Thyroid gland (tissue), 4 donors: ENCODE measurements at regions of chr10 and their contacts with region 1.

Region 1: GRCh38 chr10:70758757-70759514 is 26.2 kb downstream of the TBATA start:
- DNase-seq: peak; percentile 77 to 79
- H3K4me3 ChIP-seq: no peak overlapping the region
- H3K27ac ChIP-seq: no peak overlapping the region
- H3K4me1 ChIP-seq: peaks cover 18 to 31% of the 10 kb centered on the region in 2 donors
- H3K27me3 ChIP-seq: no peaks in the 10 kb centered on the region
- CTCF ChIP-seq: peak; percentile 33 to 76 (median 68)
- POLR2A ChIP-seq: no peak

Region 2: DNA sequence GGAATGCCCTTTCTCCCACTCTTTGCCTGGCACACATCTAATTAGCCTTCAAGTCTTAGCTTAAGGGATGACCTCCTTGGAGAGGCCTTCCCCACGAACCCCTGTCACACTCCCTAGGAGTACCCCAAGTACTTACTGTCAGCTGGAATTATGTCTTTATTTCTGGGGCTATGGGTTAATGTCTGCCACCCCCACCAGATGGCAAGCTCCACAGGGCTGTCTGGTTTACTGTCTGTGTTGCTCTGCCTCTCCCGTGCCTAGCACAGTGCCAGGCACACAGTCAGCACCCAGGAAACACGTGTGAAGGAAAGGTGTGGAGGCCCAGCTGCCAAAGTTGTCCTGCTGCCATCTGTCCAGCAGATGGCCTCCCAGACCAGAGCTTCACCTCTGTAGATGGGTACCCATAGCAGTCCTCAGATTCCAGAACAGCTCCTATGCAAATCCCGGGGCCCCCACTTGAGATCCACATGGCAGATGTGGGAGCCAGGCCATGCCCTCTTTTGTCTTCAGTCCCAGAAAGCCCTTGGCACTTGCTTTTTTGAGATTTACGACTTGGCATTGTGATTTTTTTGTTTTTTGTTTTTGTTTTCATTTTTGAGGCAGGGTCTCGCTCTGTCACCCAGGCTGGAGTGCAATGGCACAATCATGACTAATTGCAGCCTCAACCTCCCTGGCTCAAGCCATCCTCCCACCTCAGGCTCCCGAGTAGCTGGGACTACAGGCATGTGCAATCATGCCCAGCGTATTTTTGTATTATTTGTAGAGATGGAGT is 297.5 kb before region 1 on chr10:
- intact Hi-C with region 1: loop called (anchors 5 kb)
- DNase-seq: peak; percentile 53 to 56
- H3K4me3 ChIP-seq: no peak overlapping the region
- H3K27ac ChIP-seq: no peak overlapping the region
- H3K4me1 ChIP-seq: peaks cover 11 to 20% of the 10 kb centered on the region in 2 donors
- H3K27me3 ChIP-seq: no peaks in the 10 kb centered on the region
- CTCF ChIP-seq: peak; percentile 47 to 88 (median 78)
- POLR2A ChIP-seq: no peak

Region 3: DNA sequence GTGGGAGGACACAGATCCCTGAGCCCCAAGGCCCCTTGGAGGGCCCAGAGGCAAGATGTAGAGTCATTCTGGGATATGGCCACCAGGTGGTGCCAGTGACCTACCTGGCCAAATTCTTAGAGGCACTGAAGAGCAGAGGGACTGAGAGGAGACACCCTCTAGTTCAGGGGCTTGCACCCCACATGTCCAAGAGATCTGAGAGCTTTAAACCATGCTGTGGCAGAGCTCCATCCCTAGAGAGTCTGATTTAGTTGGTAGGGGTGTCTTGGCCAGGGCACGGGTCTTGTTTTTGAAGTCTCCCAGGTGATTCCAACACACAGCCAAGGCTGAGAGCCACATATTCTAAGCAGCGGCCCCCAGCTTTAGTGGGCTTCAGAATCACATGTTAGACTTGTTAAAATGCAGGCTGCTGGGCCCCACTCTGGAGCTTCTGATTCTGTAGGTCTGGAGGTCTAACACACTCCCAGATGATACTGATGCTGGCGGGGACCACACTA is 208.9 kb before region 1 on chr10:
- intact Hi-C with region 1: loop called (anchors 2 kb)
- DNase-seq: peak; percentile 69 to 76
- H3K4me3 ChIP-seq: no peak overlapping the region
- H3K27ac ChIP-seq: no peak overlapping the region
- H3K4me1 ChIP-seq: peaks cover 5 to 16% of the 10 kb centered on the region in 2 donors
- H3K27me3 ChIP-seq: no peaks in the 10 kb centered on the region
- CTCF ChIP-seq: peak; percentile 80 to 95 (median 88)
- POLR2A ChIP-seq: no peak

Region 4: DNA sequence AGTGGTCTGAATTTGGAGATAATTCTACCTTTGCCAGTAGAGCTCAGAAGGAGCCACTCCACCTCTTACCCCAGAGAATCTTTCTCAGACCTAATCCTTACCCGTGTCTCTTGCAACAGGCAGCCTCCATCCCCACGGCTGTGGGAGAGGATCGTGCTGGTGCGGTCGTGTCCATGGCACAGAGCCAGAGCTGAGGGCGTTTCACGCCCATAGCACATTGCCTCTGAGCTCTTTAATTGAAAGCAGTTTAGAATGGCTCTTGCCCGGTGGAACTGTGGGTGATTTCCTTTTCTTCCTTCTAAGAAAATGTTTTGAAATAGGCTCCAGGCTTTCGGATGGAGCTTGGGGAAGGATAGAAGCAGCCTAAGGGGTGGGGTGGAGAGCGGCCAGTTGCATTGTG is 197.9 kb before region 1 on chr10:
- intact Hi-C with region 1: loop called (anchors 5 kb)
- DNase-seq: no peak
- H3K4me3 ChIP-seq: no peak overlapping the region
- H3K27ac ChIP-seq: no peak overlapping the region
- H3K4me1 ChIP-seq: peaks cover 4 to 11% of the 10 kb centered on the region in 2 donors
- H3K27me3 ChIP-seq: no peaks in the 10 kb centered on the region
- CTCF ChIP-seq: no peak
- POLR2A ChIP-seq: no peak

Region 5: DNA sequence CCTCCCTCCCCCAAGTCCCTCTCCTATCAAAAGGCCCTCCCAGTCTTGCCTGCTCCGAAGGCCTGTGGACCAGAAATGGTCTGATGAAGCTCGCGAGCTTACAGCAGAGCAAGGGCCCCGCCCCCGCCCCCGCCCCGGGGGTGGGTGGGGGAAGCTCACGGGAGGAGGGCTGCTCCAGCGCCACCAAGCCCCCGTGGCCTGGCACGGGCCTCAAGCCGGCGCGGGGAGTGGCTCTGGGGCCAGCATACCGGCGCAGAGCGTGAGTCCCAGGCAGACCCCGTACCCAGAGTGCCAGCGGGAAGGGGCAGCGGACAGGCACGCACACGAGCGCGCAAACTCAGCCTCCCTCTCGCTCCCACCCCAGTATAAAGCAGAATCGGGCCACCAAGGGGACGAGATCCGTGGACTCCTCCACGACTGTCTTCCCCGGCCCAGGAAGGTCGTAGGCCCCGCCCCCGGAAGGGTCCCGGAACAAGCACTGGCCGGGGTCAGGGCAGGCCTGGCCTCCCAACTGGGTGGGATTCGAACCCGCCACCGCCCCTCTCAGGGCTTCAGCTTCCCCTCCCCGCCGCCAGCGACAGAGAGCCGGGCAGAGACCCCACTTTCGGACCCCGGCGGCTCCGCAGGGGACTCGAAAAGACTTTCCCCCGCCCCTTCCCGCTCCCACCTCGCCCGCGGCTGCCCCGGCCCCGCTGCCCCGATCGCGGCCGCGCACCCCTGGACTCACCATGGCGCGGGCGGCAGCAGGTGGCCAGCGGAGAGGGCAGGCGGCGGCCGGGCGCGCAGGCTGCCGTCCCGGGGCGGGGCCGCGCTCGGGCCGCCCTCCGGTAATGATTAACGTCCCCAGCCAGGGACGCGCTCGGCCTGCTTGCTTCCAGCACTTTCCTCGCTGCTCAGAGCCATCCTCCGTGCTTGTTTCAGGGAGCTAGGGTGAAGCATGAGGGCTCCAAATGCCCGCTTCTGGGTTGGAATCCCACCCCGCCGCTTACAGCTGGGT is 129.2 kb after region 1 on chr10 and contains the start of gene PCBD1:
- intact Hi-C with region 1: no loop called
- DNase-seq: peak; percentile 87 to 88
- H3K4me3 ChIP-seq: peak within 1 kb of the TSS in 2 of 3 donors; percentile 51 to 72
- H3K27ac ChIP-seq: peak within 1 kb of the TSS; percentile 87 to 97 (median 89)
- H3K4me1 ChIP-seq: peaks cover 14% of the 10 kb centered on the region in 2 donors
- H3K27me3 ChIP-seq: no peaks in the 10 kb centered on the region
- CTCF ChIP-seq: no peak
- POLR2A ChIP-seq: peak; percentile 14 to 69
- total RNA-seq, gene PCBD1: 39.4 to 124 (median 86.8) TPM